ENCODE measurements at regions of chr1 and their contacts with region 1.

Region 1: DNA sequence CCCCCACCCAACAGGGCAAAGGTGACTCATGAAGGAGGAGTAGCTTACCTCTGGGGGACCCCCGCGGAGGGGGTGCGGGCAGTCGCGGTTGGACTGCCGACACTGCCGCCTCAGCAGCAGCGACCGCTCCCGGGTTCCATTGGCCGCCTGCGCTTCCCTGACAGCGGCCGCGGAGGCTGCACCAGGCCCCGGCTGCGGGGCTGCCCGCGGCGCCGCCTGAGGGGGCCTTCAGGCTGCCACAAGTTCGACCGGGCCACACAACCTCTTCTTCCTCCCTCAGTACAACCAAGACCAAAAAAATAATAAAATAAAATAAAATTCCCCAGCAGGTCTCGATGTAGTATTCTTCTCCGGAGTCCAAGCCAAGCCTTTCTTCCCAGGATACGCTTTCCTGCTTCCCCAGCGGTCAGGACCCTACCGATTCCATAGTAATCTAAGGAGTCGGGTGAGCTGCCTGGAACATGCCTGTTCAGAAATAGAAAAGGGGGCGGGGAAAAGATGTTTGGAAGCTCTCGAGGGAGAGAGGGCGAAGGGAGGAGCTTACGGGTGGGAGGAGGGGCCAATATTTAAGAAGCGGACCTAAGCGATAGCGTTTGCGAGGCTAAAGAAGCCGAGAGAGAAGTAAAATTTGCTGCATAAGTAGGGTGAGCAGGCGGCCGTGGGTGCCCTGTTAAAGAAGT is at the start of gene PI4KB:
- DNase-seq: peak; percentile 97
- ATAC-seq: peak; percentile 93
- H3K4me3 ChIP-seq: peak within 1 kb of the TSS; percentile 72 to 99 (median 90)
- H3K4me3 Mint-ChIP-seq: peak within 1 kb of the TSS; percentile 93
- H3K27ac ChIP-seq: peak within 1 kb of the TSS; percentile 87 to 89
- H3K27ac Mint-ChIP-seq: peak within 1 kb of the TSS; percentile 96
- H3K4me1 ChIP-seq: peaks cover 21 to 26% of the 10 kb centered on the region in 2 donors
- H3K4me1 Mint-ChIP-seq: peaks cover 40% of the 10 kb centered on the region
- H3K27me3 ChIP-seq: no peaks in the 10 kb centered on the region
- H3K27me3 Mint-ChIP-seq: no peaks in the 10 kb centered on the region
- CTCF ChIP-seq: no peak
- total RNA-seq, gene PI4KB: 110 TPM in 2 replicates

Region 2: GRCh38 chr1:150974580-150975478 is 352.5 kb before region 1 on chr1 and contains the start of gene CERS2:
- CTCF ChIA-PET with region 1: no interaction called
- POLR2A ChIA-PET with region 1: no interaction called
- intact Hi-C with region 1: no loop called
- DNase-seq: peak; percentile 89
- ATAC-seq: peak; percentile 54
- H3K4me3 ChIP-seq: peak within 1 kb of the TSS; percentile 58 to 87 (median 82)
- H3K4me3 Mint-ChIP-seq: peak within 1 kb of the TSS; percentile 88
- H3K27ac ChIP-seq: peak within 1 kb of the TSS; percentile 65 to 82
- H3K27ac Mint-ChIP-seq: peak within 1 kb of the TSS; percentile 88
- H3K4me1 ChIP-seq: peaks cover 46 to 66% of the 10 kb centered on the region in 2 donors
- H3K4me1 Mint-ChIP-seq: peaks cover 64% of the 10 kb centered on the region
- H3K27me3 ChIP-seq: no peaks in the 10 kb centered on the region
- H3K27me3 Mint-ChIP-seq: no peaks in the 10 kb centered on the region
- CTCF ChIP-seq: no peak
- total RNA-seq, gene CERS2: 130 and 144 TPM in 2 replicates

Region 3: GRCh38 chr1:151198255-151199127 is 128.9 kb before region 1 on chr1 and contains the start of gene PIP5K1A:
- CTCF ChIA-PET with region 1: interaction called, 3 read pairs
- POLR2A ChIA-PET with region 1: no interaction called
- intact Hi-C with region 1: loop called (anchors 5 kb)
- DNase-seq: peak; percentile 98
- ATAC-seq: peak; percentile 98
- H3K4me3 ChIP-seq: peak within 1 kb of the TSS; percentile 82 to 96 (median 95)
- H3K4me3 Mint-ChIP-seq: peak within 1 kb of the TSS; percentile 98
- H3K27ac ChIP-seq: peak within 1 kb of the TSS; percentile 87 to 90
- H3K27ac Mint-ChIP-seq: peak within 1 kb of the TSS; percentile 94
- H3K4me1 ChIP-seq: peaks cover 21 to 29% of the 10 kb centered on the region in 2 donors
- H3K4me1 Mint-ChIP-seq: peaks cover 47% of the 10 kb centered on the region
- H3K27me3 ChIP-seq: peaks cover 0 to 2% (median 0%) of the 10 kb centered on the region in 4 experiments
- H3K27me3 Mint-ChIP-seq: no peaks in the 10 kb centered on the region
- CTCF ChIP-seq: no peak
- total RNA-seq, gene PIP5K1A: 76.1 and 78.4 TPM in 2 replicates

Region 4: DNA sequence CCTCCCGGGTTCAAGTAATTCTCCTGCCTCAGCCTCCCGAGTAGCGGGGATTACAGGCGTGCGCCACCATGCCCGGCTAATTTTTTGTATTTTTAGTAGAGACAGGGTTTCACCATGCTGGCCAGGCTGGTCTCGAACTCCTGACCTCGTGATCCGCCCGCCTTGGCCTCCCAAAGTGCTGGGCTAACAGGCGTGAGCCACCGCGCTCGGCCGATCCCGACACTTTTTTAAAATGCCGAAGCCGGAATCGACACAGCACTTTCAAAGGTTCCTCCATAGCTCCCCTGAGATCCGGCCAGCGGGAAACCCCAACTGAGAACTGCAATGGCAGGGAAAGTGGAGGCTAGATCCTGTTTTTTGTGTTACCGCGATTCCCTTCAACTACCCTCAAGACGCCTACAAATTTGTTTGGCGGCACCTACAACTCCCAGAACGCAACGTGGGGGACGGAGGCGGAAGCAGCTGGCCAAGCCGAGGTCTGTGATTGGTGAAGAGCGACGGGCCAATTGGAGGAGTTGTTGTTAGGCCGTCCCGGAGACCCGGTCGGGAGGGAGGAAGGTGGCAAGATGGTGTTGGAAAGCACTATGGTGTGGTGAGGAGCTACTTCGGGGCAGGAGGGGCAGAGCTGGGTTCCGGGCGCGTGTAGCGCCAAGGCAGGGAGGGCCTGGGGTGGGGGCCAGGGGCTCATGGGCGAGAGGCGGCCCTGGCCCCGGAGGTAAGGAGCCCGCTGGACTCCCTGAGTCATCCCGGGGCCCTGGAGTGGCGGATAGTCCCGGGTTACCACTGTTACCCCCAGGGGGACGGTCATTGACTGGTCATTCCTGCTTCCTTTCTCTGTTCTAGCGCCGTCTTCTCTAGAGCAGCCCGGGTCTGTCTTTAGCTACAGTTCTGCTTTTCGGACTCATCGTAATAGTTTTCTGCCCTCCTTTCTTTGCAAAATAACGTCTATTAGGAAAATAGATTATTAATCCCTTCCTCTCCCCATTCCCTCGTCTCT is 72.8 kb before region 1 on chr1 and contains the start of gene PSMD4:
- CTCF ChIA-PET with region 1: interaction called, 4 read pairs
- POLR2A ChIA-PET with region 1: interaction called, 5 read pairs
- intact Hi-C with region 1: loop called (anchors 1 kb)
- DNase-seq: peak; percentile 96
- ATAC-seq: peak; percentile 93
- H3K4me3 ChIP-seq: peak within 1 kb of the TSS; percentile 82 to 97 (median 84)
- H3K4me3 Mint-ChIP-seq: peak within 1 kb of the TSS; percentile 97
- H3K27ac ChIP-seq: peak within 1 kb of the TSS; percentile 66 to 85
- H3K27ac Mint-ChIP-seq: peak within 1 kb of the TSS; percentile 97
- H3K4me1 ChIP-seq: peaks cover 9 to 12% of the 10 kb centered on the region in 2 donors
- H3K4me1 Mint-ChIP-seq: peaks cover 30% of the 10 kb centered on the region
- H3K27me3 ChIP-seq: no peaks in the 10 kb centered on the region
- H3K27me3 Mint-ChIP-seq: no peaks in the 10 kb centered on the region
- CTCF ChIP-seq: no peak
- total RNA-seq, gene PSMD4: 142 and 169 TPM in 2 replicates